Thyroid gland (tissue), 4 donors: ENCODE measurements at regions of chr11 and their contacts with region 1.

Region 1: DNA sequence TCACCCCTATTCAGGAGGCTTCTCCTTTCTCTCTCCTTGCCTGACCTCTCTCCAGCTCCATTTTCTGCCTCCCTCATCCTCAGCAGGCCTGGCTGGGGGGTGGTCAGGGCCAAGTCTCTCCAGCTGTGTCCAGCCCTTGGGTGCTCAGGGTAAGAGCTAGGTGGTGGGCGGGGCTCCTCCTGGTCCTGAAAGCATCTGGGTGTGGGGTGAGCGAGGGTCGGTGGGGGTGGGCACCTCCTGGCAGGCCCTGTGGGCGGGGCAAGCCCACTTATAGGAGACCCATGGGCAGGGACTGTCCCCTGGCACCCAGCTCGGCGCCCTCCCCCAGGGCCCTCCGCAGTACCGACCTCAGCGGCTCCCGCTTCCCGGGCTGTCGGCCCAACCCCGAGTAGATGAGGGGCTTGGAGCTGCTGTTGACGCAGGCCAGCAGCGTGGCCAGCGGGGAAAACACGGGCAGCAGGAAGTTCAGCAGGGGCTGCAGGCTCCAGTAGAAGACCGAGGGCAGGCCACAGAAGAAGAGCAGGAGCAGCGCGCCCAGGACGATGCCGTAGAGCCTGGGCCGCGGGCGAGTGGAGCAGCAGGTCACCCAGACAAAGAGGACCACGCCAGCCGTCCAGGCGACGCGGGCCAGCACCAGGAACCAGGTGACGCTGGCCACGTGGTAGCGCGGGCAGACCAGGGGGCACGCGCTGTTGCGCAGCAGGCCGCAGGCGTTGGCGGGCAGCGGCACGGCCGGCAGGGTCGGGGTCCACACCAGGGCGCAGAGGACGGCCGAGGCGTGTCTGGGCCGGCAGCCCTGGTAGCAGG is 734 bp downstream of the MRGPRG start:
- DNase-seq: peak in 1 of 2 donors; percentile 0
- H3K4me3 ChIP-seq: no peak overlapping the region
- H3K27ac ChIP-seq: no peak overlapping the region
- H3K4me1 ChIP-seq: peaks cover 5 to 8% of the 10 kb centered on the region in 2 donors
- H3K27me3 ChIP-seq: no peaks in the 10 kb centered on the region
- CTCF ChIP-seq: no peak
- POLR2A ChIP-seq: no peak

Region 2: GRCh38 chr11:3109921-3110706 is 107.8 kb before region 1 on chr11:
- intact Hi-C with region 1: loop called (anchors 10 kb)
- DNase-seq: peak; percentile 55 to 56
- H3K4me3 ChIP-seq: no peak overlapping the region
- H3K27ac ChIP-seq: no peak overlapping the region
- H3K4me1 ChIP-seq: no peaks in the 10 kb centered on the region
- H3K27me3 ChIP-seq: no peaks in the 10 kb centered on the region
- CTCF ChIP-seq: peak; percentile 24 to 78 (median 54)
- POLR2A ChIP-seq: no peak